ENCODE measurements at regions of chr12 and their contacts with region 1.

Region 1: DNA sequence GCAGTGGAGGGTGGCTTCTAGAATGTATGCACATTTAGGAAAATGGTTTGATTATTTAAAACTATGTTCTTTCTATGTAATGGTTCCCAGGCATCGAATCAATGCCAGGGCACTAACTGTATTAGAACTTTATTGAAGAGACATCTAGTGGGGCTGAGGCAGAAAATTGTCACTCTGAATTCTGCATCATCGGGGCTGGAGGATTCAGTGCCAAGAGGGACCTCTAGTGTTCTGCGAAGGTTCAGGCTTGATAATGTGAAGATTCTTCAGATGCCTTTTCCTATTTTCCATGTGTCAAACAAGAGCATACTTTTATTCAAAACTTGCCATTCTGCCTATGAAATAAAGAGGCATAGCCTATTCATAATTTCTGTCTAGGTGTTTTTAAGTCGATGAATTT is 146.3 kb downstream of the CAND1 start:
- DNase-seq: peak; percentile 32
- H3K4me3 ChIP-seq: no peak overlapping the region
- H3K27ac ChIP-seq: no peak overlapping the region
- H3K4me1 ChIP-seq: peaks cover 10% of the 10 kb centered on the region
- H3K27me3 ChIP-seq: no peaks in the 10 kb centered on the region
- CTCF ChIP-seq: peak; percentile 32 to 75

Region 2: GRCh38 chr12:67428431-67428830 is 13.0 kb after region 1 on chr12:
- CTCF ChIA-PET with region 1: no interaction called
- dilution Hi-C with region 1: no loop called
- in situ Hi-C with region 1: no loop called
- intact Hi-C with region 1: loop called (anchors 2 kb)
- DNase-seq: no peak
- H3K4me3 ChIP-seq: no peak overlapping the region
- H3K27ac ChIP-seq: no peak overlapping the region
- H3K4me1 ChIP-seq: peaks cover 16% of the 10 kb centered on the region
- H3K27me3 ChIP-seq: no peaks in the 10 kb centered on the region
- CTCF ChIP-seq: no peak

Region 3: GRCh38 chr12:67515679-67516340 is 100.3 kb after region 1 on chr12:
- CTCF ChIA-PET with region 1: no interaction called
- dilution Hi-C with region 1: no loop called
- in situ Hi-C with region 1: no loop called
- intact Hi-C with region 1: no loop called
- DNase-seq: no peak
- H3K4me3 ChIP-seq: no peak overlapping the region
- H3K27ac ChIP-seq: no peak overlapping the region
- H3K4me1 ChIP-seq: peaks cover 10% of the 10 kb centered on the region
- H3K27me3 ChIP-seq: peaks cover 2% of the 10 kb centered on the region
- CTCF ChIP-seq: no peak